Lower leg skin (tissue), 4 donors: ENCODE measurements at regions of chr11 and their contacts with region 1.

Region 1: DNA sequence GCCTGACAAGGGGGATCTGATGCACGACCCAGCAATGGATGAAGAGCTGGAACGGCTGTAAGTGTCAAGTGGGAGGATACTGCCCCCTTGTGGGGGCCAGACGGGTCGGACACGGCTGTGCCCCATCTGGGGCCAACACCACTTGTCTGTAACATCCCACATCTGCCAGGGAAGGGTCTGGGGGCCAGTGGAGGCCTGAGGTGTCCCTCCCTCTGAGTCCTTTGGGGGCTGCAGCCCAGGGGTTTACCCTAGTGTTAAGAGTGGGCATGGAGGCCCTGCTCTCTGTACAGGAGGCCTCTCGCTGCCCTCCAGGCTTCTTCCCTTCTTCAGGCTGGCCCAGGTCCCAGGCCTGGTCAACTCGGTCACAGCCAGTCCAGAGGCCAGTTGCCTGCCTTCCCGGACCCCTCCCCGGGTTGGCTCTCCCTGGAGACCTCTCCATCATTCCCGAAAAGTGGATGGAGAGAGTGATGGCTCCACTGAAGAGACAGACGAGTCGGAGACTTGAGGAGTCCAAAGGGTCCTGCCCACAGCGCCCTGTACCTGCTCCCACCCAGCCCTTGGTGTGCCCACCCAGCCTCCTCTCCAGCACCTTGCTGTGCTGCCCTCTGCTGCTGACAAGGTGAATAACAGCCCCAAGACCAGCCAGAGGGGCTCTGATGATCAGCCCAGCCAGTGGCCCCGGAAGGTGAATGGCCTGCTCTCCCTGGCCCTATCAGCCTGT is 15.4 kb downstream of the ARFGAP2 start:
- DNase-seq: peak in 1 of 2 donors; percentile 48
- H3K4me3 ChIP-seq: no peak overlapping the region
- CTCF ChIP-seq: no peak
- POLR2A ChIP-seq: no peak

Region 2: GRCh38 chr11:46889689-46890475 is 271.4 kb before region 1 on chr11:
- intact Hi-C with region 1: loop called (anchors 2 kb)
- DNase-seq: peak; percentile 84 to 91
- H3K4me3 ChIP-seq: no peak overlapping the region
- CTCF ChIP-seq: peak in 1 of 3 donors; percentile 81
- POLR2A ChIP-seq: no peak